ACHN (cell line): ENCODE measurements at regions of chr9 and their contacts with region 1.

Region 1: GRCh38 chr9:112074250-112075008 is 100.7 kb downstream of the SUSD1 start:
- DNase-seq: peak; percentile 86

Region 2: DNA sequence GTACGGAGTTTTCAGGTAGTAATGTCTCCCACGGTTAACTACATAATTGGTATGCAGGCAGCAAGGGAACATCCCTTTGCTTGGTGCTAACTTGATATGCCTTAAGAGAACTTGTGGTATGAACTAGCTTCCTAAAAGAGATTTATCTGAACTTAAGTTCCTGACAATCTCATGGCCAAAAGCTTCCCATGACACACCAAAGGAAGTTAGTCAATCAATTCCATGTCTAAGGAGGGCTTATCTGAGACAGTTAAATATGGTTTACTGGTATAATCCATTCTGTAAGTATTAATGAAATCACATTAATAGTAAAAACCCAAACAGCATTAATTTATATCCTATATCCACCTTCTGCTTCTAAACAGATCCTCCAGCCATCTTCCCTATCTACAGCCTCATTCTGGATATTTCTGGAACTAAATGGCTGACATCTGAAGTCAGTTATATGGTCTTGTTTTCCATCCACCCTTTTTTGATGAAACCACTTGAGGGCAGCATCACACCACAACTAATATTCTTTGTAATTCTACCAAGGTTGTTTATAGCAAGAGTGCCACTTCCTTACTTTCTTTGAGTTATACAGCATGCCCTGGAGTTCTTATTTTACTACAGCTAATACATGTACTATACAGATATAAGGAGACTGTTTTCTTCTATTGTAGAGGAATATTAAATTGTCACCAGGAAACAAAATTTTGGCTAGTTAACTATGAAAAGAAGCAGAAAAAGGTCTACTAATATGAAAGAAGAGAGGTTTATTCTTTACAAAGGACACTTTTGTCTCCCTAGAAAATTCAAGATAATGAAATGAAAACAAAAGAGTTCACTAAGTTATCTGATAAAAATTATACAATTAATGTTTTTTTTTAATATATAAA is 314.4 kb before region 1 on chr9:
- in situ Hi-C with region 1: loop called (anchors 25 kb)
- DNase-seq: peak; percentile 80

Region 3: DNA sequence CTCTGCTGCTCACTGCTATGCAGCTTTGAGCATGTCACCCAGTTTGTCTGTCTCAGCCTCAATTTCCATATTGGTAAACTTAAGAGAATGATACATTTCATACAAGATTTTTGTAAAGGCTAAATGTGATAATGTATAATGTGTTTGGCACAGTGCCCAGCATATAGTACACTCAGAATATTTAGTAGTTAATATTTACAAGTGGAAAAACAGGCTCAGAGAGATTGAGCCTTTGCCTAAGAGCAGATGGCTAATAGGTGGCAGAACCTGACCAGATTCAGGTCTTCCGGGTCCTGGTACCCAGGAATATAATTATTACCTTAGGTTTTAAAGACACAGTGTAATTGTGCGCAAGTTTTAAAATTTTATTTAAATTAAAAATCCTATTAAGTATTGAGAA is 365.4 kb after region 1 on chr9:
- in situ Hi-C with region 1: no loop called
- DNase-seq: no peak